ENCODE measurements at regions of chr17 and their contacts with region 1.

Region 1: GRCh38 chr17:404703-405102 is 52.1 kb upstream of the RPH3AL start:
- DNase-seq: no peak
- ATAC-seq: no peak
- H3K4me3 ChIP-seq: no peak overlapping the region
- H3K27ac ChIP-seq: no peak overlapping the region
- H3K4me1 ChIP-seq: no peaks in the 10 kb centered on the region
- H3K27me3 ChIP-seq: 0 out of 2 replicates have a peak, but pooled peaks cover 1% of the 10 kb centered on the region
- CTCF ChIP-seq: no peak
- POLR2A ChIP-seq: no peak
- RAD21 ChIP-seq: no peak

Region 2: DNA sequence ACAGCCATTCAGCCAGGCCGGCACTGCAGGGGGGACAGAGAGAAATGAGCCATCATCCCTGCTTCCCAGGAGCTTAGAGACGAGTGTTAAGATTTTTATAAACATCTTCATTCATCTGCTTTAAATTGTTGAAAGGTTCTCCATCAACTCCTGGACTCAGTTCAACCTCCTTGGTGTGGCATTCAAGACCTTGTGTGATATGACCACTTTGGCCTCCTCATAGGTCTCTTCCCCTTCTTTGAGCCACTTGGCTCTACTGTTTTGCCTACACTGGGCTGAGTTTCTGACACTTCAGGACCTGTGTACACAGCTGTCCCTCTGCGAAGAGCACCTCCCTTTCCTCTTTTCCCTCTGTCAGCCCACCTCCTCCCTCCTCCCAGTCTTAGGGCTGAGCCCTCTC is 227.5 kb before region 1 on chr17:
- CTCF ChIA-PET with region 1: no interaction called
- POLR2A ChIA-PET with region 1: interaction called, 17 read pairs
- dilution Hi-C with region 1: no loop called
- in situ Hi-C with region 1: no loop called
- intact Hi-C with region 1: no loop called
- DNase-seq: no peak
- ATAC-seq: no peak
- H3K4me3 ChIP-seq: no peak overlapping the region
- H3K27ac ChIP-seq: no peak overlapping the region
- H3K4me1 ChIP-seq: no peaks in the 10 kb centered on the region
- H3K27me3 ChIP-seq: peaks cover 60% of the 10 kb centered on the region
- CTCF ChIP-seq: no peak
- POLR2A ChIP-seq: no peak
- RAD21 ChIP-seq: no peak